ENCODE measurements at regions of chr17 and their contacts with region 1.

Region 1: GRCh38 chr17:41738077-41738735 is 3.8 kb upstream of the HAP1 start:
- H3K4me3 ChIP-seq: no peak overlapping the region
- H3K27ac ChIP-seq: peak overlapping the region; percentile 11; the same call in 1 of the 2 replicates
- H3K4me1 ChIP-seq: peaks cover 2% of the 10 kb centered on the region; the same call in 1 of the 2 replicates
- CTCF ChIP-seq: peak; percentile 96

Region 2: GRCh38 chr17:41571561-41572434 is 166.4 kb before region 1 on chr17 and contains the start of gene KRT9:
- CTCF ChIA-PET with region 1: no interaction called
- POLR2A ChIA-PET with region 1: no interaction called
- H3K4me3 ChIP-seq: no peak within 1 kb of the TSS
- H3K27ac ChIP-seq: no peak within 1 kb of the TSS
- H3K4me1 ChIP-seq: no peaks in the 10 kb centered on the region
- CTCF ChIP-seq: no peak

Region 3: DNA sequence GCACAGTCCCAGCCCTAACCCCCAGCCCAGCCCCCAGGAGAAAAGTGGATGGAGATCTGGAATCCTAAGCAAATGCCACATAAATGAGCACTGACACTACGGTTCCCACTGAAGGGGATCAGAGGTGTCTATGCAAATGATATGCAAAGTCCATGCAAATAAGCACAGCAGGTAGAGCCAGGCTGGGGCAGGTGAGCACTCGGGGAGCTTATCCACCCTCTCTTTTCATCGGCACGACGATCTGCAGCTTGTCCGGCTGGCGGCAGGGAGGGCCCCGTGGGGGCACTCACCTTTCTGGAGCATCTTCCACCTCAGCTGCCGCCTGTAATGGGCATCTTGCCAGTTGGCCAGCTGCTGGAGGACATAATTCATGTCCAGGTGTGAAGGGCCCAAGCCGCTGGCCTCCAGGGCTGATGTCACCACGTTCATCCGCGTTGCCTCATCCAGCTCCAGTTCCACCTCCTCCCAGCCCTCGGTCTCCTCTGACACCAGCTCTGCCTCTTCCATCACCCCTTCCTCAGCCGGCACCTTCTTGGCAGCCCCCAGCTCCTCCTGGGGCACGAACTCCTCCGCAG is 13.6 kb before region 1 on chr17:
- CTCF ChIA-PET with region 1: interaction called, 5 read pairs
- POLR2A ChIA-PET with region 1: interaction called, 28 read pairs
- H3K4me3 ChIP-seq: no peak overlapping the region
- H3K27ac ChIP-seq: no peak overlapping the region
- H3K4me1 ChIP-seq: no peaks in the 10 kb centered on the region
- CTCF ChIP-seq: no peak

Region 4: DNA sequence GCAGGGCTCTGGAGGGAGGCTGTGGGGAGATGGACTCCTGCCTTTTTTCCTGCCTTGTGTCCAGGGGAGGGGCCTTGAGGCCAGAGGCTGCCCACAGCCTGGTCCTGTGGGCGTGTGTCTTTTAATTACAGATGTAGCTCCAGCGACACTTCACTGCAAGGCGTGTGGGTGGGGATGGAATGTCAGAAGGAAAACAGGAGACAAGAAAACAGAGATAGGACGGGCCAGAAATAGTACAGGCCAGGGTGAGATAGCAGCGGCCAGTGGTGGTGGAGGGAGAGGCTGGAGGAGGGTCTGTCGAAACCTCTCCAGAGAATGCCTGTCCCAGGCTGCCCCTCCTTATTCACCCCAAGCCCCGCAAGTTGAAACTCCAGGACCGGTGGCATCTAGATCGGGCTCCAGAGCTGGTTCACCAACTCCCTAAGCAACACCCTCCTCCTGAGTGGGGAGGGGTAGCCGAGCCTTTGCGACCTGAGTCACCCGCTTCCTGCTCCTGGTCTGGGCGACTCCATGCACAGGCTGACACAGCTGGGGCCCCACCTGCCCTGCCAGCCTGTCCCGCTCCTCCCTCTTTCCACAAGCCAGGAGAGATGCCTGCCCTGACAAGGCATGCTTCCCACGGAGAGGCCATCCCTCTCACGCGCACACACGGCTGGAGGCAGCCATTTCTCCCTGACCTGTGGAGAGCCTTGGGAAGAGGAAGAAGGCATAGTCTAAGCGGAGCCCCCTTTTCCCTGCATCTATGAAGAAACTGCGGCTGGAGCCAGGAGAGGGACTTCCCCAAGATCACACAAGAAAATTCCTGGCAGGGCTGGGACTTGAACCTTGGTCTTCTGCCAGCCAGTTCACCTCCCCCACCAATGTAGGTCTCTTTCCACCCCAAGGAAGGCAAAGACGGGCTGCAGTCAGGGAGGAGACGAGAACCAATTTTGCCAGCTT is 54.9 kb after region 1 on chr17:
- CTCF ChIA-PET with region 1: interaction called, 16 read pairs
- POLR2A ChIA-PET with region 1: interaction called, 5 read pairs
- H3K4me3 ChIP-seq: no peak overlapping the region; the same call in 1 of the 2 replicates
- H3K27ac ChIP-seq: peak overlapping the region; percentile 82
- H3K4me1 ChIP-seq: peaks cover 17% of the 10 kb centered on the region
- CTCF ChIP-seq: no peak

Region 5: GRCh38 chr17:41811549-41812380 is 73.6 kb after region 1 on chr17 and contains the start of gene P3H4:
- CTCF ChIA-PET with region 1: interaction called, 12 read pairs
- POLR2A ChIA-PET with region 1: interaction called, 13 read pairs
- H3K4me3 ChIP-seq: peak within 1 kb of the TSS; percentile 73
- H3K27ac ChIP-seq: peak within 1 kb of the TSS; percentile 89
- H3K4me1 ChIP-seq: 0 out of 2 replicates have a peak, but pooled peaks cover 8% of the 10 kb centered on the region
- CTCF ChIP-seq: peak; percentile 78

Region 6: DNA sequence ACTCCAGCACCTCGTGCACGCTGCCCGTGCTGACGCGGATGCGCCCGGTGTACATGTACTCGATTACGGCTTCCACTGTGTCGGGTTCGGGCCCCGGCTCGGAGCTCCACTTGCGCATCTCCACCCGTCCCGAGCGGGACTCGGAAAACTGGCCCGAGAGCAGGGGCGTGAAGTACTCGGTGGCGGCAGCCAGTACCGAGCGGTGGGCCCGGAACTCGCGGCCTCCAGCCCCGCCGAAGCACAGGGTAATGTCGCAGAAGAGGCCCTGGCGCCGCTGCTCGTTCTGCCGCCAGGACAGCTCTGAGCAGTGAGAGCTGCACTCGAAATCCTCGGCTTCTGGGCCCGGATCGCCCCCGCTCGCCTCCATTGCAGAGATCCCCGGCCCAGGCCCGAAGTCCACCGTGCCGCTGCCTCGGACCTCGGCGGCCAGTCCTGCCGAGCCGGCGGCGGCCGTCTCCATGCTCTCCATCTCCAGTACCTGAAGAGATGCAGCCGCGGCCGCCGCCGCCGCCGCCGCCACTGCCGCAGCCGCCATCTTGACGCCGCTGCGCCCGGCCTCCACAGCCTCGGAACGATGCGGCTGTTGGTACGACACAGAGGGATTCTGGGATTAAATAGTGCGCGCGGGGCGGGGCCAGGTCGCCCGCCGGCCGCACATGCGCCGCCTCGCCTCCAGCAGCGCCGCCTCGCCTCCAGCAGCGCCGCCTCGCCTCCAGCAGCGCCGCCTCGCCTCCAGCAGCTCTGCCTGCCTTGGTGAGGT is 126.8 kb after region 1 on chr17 and contains the start of gene KLHL11:
- CTCF ChIA-PET with region 1: interaction called, 10 read pairs
- POLR2A ChIA-PET with region 1: interaction called, 6 read pairs
- H3K4me3 ChIP-seq: peak within 1 kb of the TSS; percentile 96
- H3K27ac ChIP-seq: peak within 1 kb of the TSS; percentile 91
- H3K4me1 ChIP-seq: peaks cover 21% of the 10 kb centered on the region
- CTCF ChIP-seq: no peak; the same call in 1 of the 2 replicates

Measured in HEK293 (cell line).